ENCODE measurements at regions of chr5 and their contacts with region 1.

Region 1: DNA sequence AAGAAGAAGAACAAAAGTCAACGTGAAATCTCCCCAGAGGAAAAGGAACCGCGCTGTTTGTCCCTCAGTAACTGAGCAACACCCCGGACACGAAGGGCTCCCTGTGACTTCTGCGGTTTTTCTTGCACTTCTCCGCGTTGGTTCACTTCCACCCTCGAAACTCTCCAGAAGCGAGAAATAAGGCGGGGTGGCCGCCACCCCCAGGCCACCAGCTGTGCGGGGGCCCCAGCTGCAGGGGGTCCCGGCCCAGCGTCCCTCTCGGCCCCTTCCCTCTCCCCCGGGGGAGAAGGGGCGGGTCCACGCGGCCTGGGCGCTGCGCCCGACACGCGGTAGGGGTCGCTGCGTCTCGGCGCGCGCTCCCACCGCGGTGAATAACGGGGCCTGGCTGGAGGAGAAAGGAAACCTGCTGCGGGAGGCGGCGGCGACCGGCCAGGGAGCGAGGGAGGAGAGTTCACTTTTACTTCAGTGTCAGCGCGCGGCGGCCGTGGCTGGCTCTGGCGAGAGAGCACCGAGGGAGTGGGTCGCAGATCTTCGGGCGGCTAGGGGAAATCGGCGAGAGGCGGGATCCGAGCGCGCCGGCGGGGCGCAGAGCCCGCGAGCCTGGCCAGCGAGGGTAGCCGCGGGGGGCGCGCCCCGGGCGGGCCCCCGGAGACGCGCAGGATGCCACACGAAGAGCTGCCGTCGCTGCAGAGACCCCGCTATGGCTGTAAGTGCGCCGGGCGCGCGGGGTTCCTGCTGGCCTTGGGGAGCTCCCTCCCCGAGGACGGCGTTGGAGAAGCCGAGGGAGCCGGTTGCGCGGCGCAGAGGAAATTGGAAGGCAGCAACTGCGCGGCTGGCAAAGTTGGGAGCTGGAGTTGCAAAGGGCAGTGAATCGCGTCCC is at the start of gene IQGAP2:
- DNase-seq: peak; percentile 96
- H3K4me3 Mint-ChIP-seq: peak within 1 kb of the TSS; percentile 95
- H3K27ac Mint-ChIP-seq: peak within 1 kb of the TSS; percentile 99
- H3K4me1 Mint-ChIP-seq: peaks cover 57% of the 10 kb centered on the region
- H3K27me3 Mint-ChIP-seq: peaks cover 7% of the 10 kb centered on the region
- total RNA-seq, gene IQGAP2: 37.3 and 39.3 TPM in 2 replicates

Region 2: DNA sequence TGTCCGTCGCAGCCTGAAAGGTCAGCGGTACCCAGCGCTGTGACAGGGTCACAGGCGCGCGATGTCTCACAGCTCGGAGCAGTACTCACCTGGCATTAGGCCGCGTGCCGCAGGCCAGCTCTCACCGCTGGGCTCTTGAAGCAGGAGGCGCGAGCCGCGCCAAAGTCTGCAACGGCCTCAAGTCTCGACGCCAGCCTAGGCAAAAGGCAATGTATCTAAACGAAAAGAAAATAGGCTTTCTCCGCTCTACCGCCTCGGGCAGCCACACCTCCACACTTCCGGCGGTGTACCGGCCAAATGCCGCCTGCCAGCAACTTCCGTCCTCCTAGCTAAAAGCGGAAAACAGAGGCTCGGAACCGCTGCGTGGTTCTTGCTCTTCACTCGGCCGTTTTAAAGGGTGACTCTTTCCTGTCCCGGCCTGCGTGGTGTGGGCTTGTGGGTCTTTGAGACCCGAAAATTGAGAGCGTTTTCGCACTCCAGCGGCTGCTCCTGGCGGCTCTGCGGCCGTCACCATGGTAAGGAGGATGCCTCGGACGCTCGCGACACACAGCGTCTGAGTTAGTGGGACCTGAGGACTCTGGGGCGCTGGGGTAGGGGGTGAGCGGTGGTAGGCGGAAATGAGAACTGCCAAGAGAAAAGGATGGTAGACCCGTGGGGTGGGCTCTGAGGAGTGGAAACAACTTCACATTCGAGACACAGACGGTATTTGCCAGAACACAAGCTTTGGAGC is 1636.1 kb before region 1 on chr5 and contains the starts of genes GFM2 and NSA2:
- intact Hi-C with region 1: loop called (anchors 10 kb)
- DNase-seq: peak; percentile 98
- H3K4me3 Mint-ChIP-seq: peak within 1 kb of the TSS; percentile 99
- H3K27ac Mint-ChIP-seq: peak within 1 kb of the TSS; percentile 98
- H3K4me1 Mint-ChIP-seq: peaks cover 25% of the 10 kb centered on the region
- H3K27me3 Mint-ChIP-seq: no peaks in the 10 kb centered on the region
- total RNA-seq, gene GFM2: 37.9 and 42.7 TPM in 2 replicates
- total RNA-seq, gene NSA2: 94.0 and 95.8 TPM in 2 replicates

Region 3: DNA sequence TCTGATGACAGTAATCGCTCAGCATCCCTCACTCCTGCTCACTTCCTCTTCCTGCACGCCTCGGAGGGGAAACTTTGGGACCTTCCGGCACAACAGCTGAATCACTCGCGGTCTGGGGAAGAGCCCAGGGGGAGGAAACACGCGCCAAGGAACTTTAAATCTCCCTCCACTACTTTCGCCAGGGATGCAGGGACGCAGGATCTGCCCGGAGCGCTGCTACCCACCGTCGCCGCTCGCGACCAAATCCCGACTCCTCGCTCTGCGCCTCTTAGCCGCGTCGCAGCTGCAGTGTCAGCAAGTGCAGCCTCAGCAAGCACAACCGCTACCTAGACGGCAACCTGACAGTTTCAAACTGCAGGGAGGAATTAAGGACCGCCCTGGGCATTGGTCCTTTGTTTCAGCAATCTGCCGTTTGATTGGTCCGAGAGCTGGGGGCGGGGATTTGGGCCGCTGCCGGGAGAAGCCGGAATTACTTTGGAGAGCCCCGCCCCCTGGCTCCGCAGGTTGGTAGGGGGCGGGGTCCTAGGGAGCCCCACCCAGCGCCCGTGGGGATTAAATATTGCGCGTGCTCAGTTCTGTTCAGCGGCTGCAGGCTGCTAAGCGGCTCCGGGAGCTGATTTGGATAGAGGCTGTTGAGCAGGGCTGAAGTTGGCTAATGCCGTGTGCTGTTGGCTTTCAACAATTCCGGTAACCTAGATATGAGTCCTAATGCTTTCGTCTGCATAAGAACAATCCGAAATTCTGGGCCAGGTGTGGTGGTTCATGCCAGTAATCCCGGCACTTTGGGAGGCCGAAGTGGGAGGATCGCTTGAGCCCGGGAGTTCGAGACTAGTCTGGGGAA is 685.8 kb before region 1 on chr5 and contains the start of gene POC5:
- intact Hi-C with region 1: loop called (anchors 2 kb)
- DNase-seq: peak; percentile 99
- H3K4me3 Mint-ChIP-seq: peak within 1 kb of the TSS; percentile 100
- H3K27ac Mint-ChIP-seq: peak within 1 kb of the TSS; percentile 100
- H3K4me1 Mint-ChIP-seq: peaks cover 29% of the 10 kb centered on the region
- H3K27me3 Mint-ChIP-seq: peaks cover 7% of the 10 kb centered on the region
- total RNA-seq, gene POC5: 20.8 and 21.3 TPM in 2 replicates

Region 4: DNA sequence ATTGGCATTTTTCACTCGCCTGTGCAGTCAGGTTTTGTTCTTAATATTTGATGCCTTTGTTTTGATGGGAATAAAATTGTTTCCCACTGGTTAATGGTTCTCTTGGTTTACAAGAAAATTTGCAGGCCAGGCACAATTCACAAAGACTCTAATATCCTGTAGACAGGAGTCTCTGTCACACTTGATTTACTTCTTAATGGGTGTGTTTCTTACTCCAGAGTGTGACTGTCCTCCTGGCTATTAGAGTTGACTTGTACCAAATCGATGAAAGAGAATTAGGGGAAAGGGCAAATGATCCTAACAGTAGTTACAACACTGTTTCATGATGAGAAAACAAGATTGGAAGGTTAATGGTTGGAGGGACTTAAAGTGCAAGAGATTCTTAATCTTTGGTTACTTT is 462.7 kb before region 1 on chr5:
- intact Hi-C with region 1: no loop called
- DNase-seq: no peak
- H3K4me3 Mint-ChIP-seq: no peak overlapping the region
- H3K27ac Mint-ChIP-seq: no peak overlapping the region
- H3K4me1 Mint-ChIP-seq: no peaks in the 10 kb centered on the region
- H3K27me3 Mint-ChIP-seq: no peaks in the 10 kb centered on the region

Region 5: DNA sequence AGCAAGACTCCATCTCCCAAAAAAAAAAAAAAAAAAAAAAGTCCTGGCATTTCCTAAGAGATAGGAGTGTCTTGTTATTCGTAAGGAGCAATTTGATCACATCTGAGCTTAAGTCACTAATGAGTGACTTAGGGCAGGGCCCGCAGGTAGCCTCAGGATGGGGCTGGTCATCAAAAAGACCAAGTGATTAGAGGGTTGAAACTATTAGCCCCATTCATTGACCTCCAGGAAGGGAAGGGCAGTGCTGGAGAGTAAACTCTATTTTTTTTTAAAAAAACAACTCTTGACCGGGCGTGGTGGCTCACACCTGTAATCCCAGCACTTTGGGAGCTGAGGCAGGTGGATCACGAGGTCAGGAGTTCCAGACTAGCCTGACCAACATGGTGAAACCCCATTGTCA is 46.3 kb before region 1 on chr5:
- intact Hi-C with region 1: no loop called
- DNase-seq: no peak
- H3K4me3 Mint-ChIP-seq: no peak overlapping the region
- H3K27ac Mint-ChIP-seq: no peak overlapping the region
- H3K4me1 Mint-ChIP-seq: no peaks in the 10 kb centered on the region
- H3K27me3 Mint-ChIP-seq: peaks cover 7% of the 10 kb centered on the region

Region 6: GRCh38 chr5:76367623-76368371 is 35.3 kb before region 1 on chr5:
- intact Hi-C with region 1: loop called (anchors 1 kb)
- DNase-seq: peak; percentile 68
- H3K4me3 Mint-ChIP-seq: no peak overlapping the region
- H3K27ac Mint-ChIP-seq: peak overlapping the region; percentile 84
- H3K4me1 Mint-ChIP-seq: peaks cover 24% of the 10 kb centered on the region
- H3K27me3 Mint-ChIP-seq: no peaks in the 10 kb centered on the region

Region 7: GRCh38 chr5:76544268-76544926 is 141.3 kb after region 1 on chr5:
- intact Hi-C with region 1: loop called (anchors 1 kb)
- DNase-seq: peak; percentile 85
- H3K4me3 Mint-ChIP-seq: peak overlapping the region; percentile 87
- H3K27ac Mint-ChIP-seq: peak overlapping the region; percentile 98
- H3K4me1 Mint-ChIP-seq: peaks cover 83% of the 10 kb centered on the region
- H3K27me3 Mint-ChIP-seq: no peaks in the 10 kb centered on the region

Region 8: GRCh38 chr5:76641514-76642120 is 238.5 kb after region 1 on chr5:
- intact Hi-C with region 1: loop called (anchors 2 kb)
- DNase-seq: peak; percentile 90
- H3K4me3 Mint-ChIP-seq: no peak overlapping the region
- H3K27ac Mint-ChIP-seq: no peak overlapping the region
- H3K4me1 Mint-ChIP-seq: peaks cover 14% of the 10 kb centered on the region
- H3K27me3 Mint-ChIP-seq: no peaks in the 10 kb centered on the region